ENCODE measurements at regions of chr11 and their contacts with region 1.

Region 1: GRCh38 chr11:65615229-65615941 is at the start of gene PCNX3:
- DNase-seq: peak; percentile 95 to 100 (median 100)
- ATAC-seq: peak; percentile 92
- H3K4me3 ChIP-seq: peak within 1 kb of the TSS; percentile 89
- H3K4me3 Mint-ChIP-seq: peak within 1 kb of the TSS; percentile 94 to 99 (median 97)
- H3K27ac ChIP-seq: peak within 1 kb of the TSS; percentile 98
- H3K27ac Mint-ChIP-seq: peak within 1 kb of the TSS; percentile 90 to 99 (median 97)
- H3K4me1 ChIP-seq: peaks cover 42 to 45% of the 10 kb centered on the region in 2 donors
- H3K4me1 Mint-ChIP-seq: peaks cover 28 to 49% (median 39%) of the 10 kb centered on the region in 7 donors
- H3K27me3 ChIP-seq: no peaks in the 10 kb centered on the region
- H3K27me3 Mint-ChIP-seq: peaks cover 0 to 6% (median 0%) of the 10 kb centered on the region in 5 donors
- total RNA-seq, gene PCNX3: 50.4 to 64.9 (median 56.6) TPM

Region 2: DNA sequence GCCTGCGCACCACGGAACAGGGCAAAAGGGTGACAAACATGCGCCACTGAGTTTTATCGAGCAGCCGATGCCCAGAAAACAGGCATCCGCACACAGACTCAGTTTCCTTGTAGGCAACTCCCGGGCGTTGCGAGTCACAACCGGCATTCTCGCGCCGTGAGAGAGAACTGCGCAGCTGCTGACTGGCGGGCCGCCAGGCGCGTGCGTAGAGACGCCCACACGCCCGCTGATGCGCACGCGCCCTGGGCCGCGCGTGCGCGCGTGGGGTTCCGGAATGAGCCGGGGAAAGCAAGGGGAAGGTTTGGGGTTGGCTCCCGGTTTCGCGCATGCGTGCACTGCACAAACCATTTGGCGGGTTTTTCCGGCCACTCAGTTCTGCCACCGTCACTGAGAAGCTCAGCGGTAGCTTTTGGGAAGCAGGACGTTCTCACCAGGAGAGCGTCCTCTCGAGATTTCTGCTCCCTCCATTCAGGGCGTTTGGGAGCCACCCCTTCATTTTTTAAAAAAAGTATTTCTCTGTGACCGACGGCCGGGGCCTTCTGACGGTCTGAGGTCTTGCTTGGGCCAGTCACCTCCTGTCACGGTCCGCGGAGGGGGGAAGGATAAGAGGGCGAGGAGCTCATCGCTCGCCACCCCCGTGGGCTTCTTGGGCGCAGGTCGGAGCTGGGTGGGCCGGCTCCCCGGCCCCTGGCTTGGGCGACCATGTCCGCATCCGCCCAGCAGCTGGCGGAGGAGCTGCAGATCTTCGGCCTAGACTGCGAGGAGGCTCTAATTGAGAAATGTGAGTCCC is 353.6 kb before region 1 on chr11 and contains the start of gene POLA2:
- CTCF ChIA-PET with region 1: no interaction called
- POLR2A ChIA-PET with region 1: interaction called, 3 read pairs
- intact Hi-C with region 1: loop called in 1 of 2 experiments (anchors 1 kb)
- DNase-seq: peak; percentile 94 to 99 (median 98)
- ATAC-seq: peak; percentile 96
- H3K4me3 ChIP-seq: peak within 1 kb of the TSS; percentile 88
- H3K4me3 Mint-ChIP-seq: peak within 1 kb of the TSS; percentile 83 to 95 (median 92)
- H3K27ac ChIP-seq: peak within 1 kb of the TSS; percentile 88
- H3K27ac Mint-ChIP-seq: peak within 1 kb of the TSS; percentile 91 to 98 (median 97)
- H3K4me1 ChIP-seq: peaks cover 9 to 18% of the 10 kb centered on the region in 2 donors
- H3K4me1 Mint-ChIP-seq: peaks cover 20 to 62% (median 50%) of the 10 kb centered on the region in 7 donors
- H3K27me3 ChIP-seq: no peaks in the 10 kb centered on the region
- H3K27me3 Mint-ChIP-seq: peaks cover 0 to 2% (median 0%) of the 10 kb centered on the region in 5 donors
- total RNA-seq, gene POLA2: 13.4 to 51.6 (median 27.8) TPM

Region 3: GRCh38 chr11:65540297-65541092 is 74.9 kb before region 1 on chr11:
- CTCF ChIA-PET with region 1: interaction called, 3 read pairs
- POLR2A ChIA-PET with region 1: interaction called, 10 read pairs
- intact Hi-C with region 1: loop called (anchors 1 to 2 kb)
- DNase-seq: peak; percentile 84 to 95 (median 91)
- ATAC-seq: peak; percentile 94
- H3K4me3 ChIP-seq: peak overlapping the region; percentile 71
- H3K4me3 Mint-ChIP-seq: peak overlapping the region; percentile 81 to 90 (median 84)
- H3K27ac ChIP-seq: peak overlapping the region; percentile 74
- H3K27ac Mint-ChIP-seq: peak overlapping the region in 8 of 9 donors; percentile 70 to 92 (median 86)
- H3K4me1 ChIP-seq: peaks cover 12 to 18% of the 10 kb centered on the region in 2 donors
- H3K4me1 Mint-ChIP-seq: peaks cover 13 to 32% (median 22%) of the 10 kb centered on the region in 7 donors
- H3K27me3 ChIP-seq: no peaks in the 10 kb centered on the region
- H3K27me3 Mint-ChIP-seq: no peaks in the 10 kb centered on the region

Region 4: GRCh38 chr11:65625628-65626342 is 10.4 kb after region 1 on chr11:
- CTCF ChIA-PET with region 1: interaction called, 9 read pairs
- POLR2A ChIA-PET with region 1: interaction called, 5 read pairs
- intact Hi-C with region 1: loop called in 1 of 2 experiments (anchors 1 kb)
- DNase-seq: peak in 8 of 9 donors; percentile 42 to 68 (median 54)
- ATAC-seq: peak; percentile 92
- H3K4me3 ChIP-seq: no peak overlapping the region
- H3K4me3 Mint-ChIP-seq: peak overlapping the region in 1 of 10 donors; percentile 41
- H3K27ac ChIP-seq: no peak overlapping the region
- H3K27ac Mint-ChIP-seq: peak overlapping the region in 4 of 9 donors; percentile 22 to 86 (median 68)
- H3K4me1 ChIP-seq: peaks cover 3 to 9% of the 10 kb centered on the region in 2 donors
- H3K4me1 Mint-ChIP-seq: peaks cover 4 to 13% (median 7%) of the 10 kb centered on the region in 7 donors
- H3K27me3 ChIP-seq: no peaks in the 10 kb centered on the region
- H3K27me3 Mint-ChIP-seq: no peaks in the 10 kb centered on the region

Region 5: GRCh38 chr11:65802841-65803240 is 187.5 kb after region 1 on chr11:
- CTCF ChIA-PET with region 1: no interaction called
- POLR2A ChIA-PET with region 1: no interaction called
- intact Hi-C with region 1: no loop called
- DNase-seq: no peak
- ATAC-seq: no peak
- H3K4me3 ChIP-seq: no peak overlapping the region
- H3K4me3 Mint-ChIP-seq: no peak overlapping the region
- H3K27ac ChIP-seq: no peak overlapping the region
- H3K27ac Mint-ChIP-seq: no peak overlapping the region
- H3K4me1 ChIP-seq: no peaks in the 10 kb centered on the region
- H3K4me1 Mint-ChIP-seq: peaks cover 0 to 6% (median 0%) of the 10 kb centered on the region in 7 donors
- H3K27me3 ChIP-seq: peaks cover 3 to 9% of the 10 kb centered on the region in 2 donors
- H3K27me3 Mint-ChIP-seq: peaks cover 14 to 40% (median 37%) of the 10 kb centered on the region in 5 donors

Region 6: DNA sequence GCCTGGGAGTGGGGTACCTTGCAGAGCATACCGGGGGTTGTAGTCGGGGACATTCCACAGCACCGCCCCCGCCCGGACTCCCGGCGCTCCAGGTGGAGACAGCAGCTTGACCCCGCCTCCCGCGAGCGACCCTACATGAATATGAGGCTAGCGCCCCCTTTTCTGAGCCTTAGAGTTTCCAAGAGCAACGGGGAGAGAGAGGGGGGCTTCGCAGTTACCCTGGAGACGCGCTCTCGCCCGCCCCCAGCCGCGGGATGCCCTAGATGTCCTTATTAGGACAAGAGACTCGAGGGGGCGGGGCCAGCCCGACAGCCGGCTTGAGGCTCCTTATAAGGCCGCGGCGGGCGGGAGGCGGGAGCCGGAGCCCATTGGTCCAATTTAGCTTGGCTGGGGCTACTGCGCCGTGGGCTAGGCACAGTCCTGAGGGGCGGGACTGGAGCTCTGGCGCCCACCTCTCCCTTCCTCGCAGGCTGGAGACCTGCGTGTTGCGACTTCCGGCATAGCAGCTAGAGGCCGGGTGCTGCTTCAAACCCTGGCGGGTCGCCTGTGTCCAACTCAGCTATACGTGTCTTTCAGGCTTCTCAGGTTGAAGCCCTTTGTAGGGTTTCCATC is 243.9 kb after region 1 on chr11:
- CTCF ChIA-PET with region 1: interaction called, 4 read pairs
- POLR2A ChIA-PET with region 1: interaction called, 24 read pairs
- intact Hi-C with region 1: loop called (anchors 1 kb)
- DNase-seq: peak; percentile 84 to 97 (median 90)
- ATAC-seq: peak; percentile 71
- H3K4me3 ChIP-seq: peak overlapping the region; percentile 65
- H3K4me3 Mint-ChIP-seq: peak overlapping the region; percentile 92 to 100 (median 97)
- H3K27ac ChIP-seq: peak overlapping the region; percentile 88
- H3K27ac Mint-ChIP-seq: peak overlapping the region; percentile 88 to 99 (median 97)
- H3K4me1 ChIP-seq: peaks cover 39 to 41% of the 10 kb centered on the region in 2 donors
- H3K4me1 Mint-ChIP-seq: peaks cover 35 to 63% (median 50%) of the 10 kb centered on the region in 7 donors
- H3K27me3 ChIP-seq: no peaks in the 10 kb centered on the region
- H3K27me3 Mint-ChIP-seq: no peaks in the 10 kb centered on the region

Region 7: GRCh38 chr11:66051766-66052663 is 436.6 kb after region 1 on chr11 and contains the start of gene SF3B2:
- CTCF ChIA-PET with region 1: no interaction called
- POLR2A ChIA-PET with region 1: no interaction called
- intact Hi-C with region 1: loop called in 1 of 2 experiments (anchors 1 kb)
- DNase-seq: peak; percentile 81 to 94 (median 93)
- ATAC-seq: peak; percentile 99
- H3K4me3 ChIP-seq: peak within 1 kb of the TSS; percentile 88
- H3K4me3 Mint-ChIP-seq: peak within 1 kb of the TSS; percentile 95 to 100 (median 98)
- H3K27ac ChIP-seq: peak within 1 kb of the TSS; percentile 93
- H3K27ac Mint-ChIP-seq: peak within 1 kb of the TSS; percentile 95 to 99 (median 98)
- H3K4me1 ChIP-seq: peaks cover 14 to 18% of the 10 kb centered on the region in 2 donors
- H3K4me1 Mint-ChIP-seq: peaks cover 17 to 44% (median 38%) of the 10 kb centered on the region in 7 donors
- H3K27me3 ChIP-seq: no peaks in the 10 kb centered on the region
- H3K27me3 Mint-ChIP-seq: peaks cover 0 to 9% (median 0%) of the 10 kb centered on the region in 5 donors
- total RNA-seq, gene SF3B2: 163 to 248 (median 206) TPM